AG04449 (cell line): ENCODE measurements at regions of chr4 and their contacts with region 1.

Region 1: DNA sequence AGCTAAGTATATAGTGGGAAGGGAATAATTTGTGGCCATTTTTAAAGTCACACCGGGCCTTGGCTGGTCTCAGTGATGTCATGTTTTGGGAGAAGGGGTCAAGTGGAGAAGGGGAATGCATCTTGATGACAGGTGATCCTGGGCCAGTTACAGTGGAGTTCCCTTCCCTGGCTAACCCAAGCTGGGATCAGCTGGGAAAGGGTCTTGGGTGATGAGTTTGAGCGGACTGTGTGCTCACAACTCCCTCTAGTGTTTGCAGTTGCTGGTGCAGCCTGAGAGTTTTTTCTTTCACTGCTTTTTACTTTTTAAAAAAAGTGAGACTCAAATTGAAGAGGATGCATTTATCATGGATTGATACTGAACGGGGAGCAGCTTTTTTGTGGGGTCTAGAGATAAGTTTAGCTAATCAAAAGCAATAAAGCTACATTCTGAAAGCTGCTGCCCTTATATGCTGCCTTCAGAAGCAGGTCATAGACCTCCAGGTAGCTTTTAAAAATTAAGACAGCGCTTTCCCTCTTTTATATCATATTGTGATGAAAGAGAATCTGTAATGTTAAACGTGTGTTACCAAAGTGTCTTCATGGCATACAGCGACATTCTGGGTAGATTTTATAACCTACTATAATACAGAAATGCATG is 164.7 kb downstream of the DCLK2 start:
- DNase-seq: no peak
- H3K4me3 ChIP-seq: no peak overlapping the region
- CTCF ChIP-seq: peak; percentile 78

Region 2: DNA sequence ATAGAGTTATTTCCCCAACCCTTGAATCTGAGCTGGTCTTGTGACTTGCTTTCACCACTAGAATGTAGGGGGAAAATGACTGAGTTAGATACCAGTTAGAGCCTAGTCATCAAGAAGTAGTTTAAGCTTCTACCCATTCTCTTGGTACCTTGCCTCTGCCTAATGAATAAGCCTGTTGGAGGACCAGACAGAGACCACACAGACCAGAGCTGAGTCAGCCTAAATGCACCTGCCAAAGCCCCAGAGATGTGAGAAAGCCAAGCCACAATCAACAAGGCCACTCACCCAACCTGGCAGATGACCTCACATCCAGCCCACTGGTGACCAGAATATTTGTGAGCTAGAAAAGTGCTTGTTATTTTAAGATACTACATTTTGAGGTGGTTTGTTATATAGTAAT is 249.9 kb before region 1 on chr4:
- CTCF ChIA-PET with region 1: interaction called, 64 read pairs
- POLR2A ChIA-PET with region 1: no interaction called
- DNase-seq: no peak
- H3K4me3 ChIP-seq: no peak overlapping the region
- CTCF ChIP-seq: no peak

Region 3: GRCh38 chr4:150078637-150079581 is 164.0 kb before region 1 on chr4:
- CTCF ChIA-PET with region 1: interaction called, 10 read pairs
- POLR2A ChIA-PET with region 1: interaction called, 3 read pairs
- DNase-seq: no peak
- H3K4me3 ChIP-seq: peak overlapping the region; percentile 82
- CTCF ChIP-seq: no peak

Region 4: DNA sequence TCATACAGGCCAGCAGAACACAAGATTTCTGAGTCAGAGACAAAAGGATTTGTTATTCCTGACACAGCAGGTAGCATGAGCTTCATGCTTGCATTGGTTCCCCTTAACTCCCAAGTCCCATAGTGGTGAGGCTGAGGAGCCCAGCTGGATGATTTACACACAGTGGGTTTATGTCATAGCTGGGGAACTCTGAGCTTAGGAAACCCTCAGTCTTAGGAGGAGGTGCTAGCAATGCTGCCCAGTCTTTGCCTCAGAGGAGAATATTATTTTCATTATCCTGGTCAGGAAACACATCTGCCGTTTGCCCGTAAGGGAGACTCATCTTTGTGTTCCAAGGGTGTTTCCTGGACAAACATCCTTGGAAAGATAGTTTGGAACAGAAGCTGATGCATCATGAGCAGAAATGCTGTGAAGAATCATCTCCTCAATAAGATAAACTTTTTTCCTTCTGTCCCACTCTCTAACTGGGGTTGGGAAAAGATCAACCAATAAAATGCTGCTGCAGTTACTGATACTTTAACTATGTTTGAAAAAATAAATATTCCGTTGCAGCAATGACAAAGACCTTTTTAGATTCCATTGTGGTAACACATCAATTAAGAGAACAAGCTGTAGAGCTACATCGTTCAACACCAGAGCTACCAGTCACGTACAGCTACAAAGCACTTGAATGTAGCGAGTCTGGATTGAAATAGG is 17.9 kb before region 1 on chr4:
- CTCF ChIA-PET with region 1: interaction called, 28 read pairs
- POLR2A ChIA-PET with region 1: interaction called, 7 read pairs
- DNase-seq: peak; percentile 93
- H3K4me3 ChIP-seq: no peak overlapping the region
- CTCF ChIP-seq: no peak

Region 5: DNA sequence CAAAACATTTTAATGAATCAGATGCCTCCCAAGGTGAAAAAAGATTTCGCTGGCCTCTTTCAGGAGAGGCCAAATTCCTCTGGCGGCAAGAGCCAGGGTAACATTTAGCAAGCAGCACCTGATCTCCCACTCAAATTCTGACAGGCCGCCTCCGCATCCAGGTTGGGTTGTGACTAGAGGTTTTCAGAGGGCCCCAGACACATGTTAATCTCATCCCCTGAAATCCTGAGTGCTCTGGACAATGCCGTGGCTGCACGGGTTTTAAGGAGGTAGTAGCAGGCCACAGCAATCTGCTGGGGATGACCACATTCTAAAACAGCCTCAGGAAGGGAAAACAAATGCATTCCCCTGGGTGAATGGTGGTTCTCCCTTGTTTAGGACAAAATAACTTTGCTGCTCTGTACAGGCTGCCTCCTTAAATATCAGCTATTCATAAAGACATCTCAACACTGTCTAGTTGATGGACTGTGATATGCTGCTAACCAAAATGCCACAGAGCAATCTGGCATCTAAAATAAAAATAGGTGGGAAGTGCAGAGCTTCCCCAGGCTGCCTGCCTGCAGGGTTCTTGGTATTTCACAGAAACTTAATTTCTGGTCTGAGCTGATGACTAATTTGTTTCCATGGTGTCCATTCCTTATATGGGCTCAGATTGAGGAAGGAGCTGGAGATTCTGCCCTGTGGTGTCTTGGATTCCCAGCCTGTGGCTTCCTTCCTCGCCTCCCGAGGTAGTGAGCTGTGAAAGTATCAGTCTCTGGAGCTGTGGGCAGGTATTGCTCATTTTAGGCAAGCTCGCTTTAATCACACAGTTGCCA is 37.3 kb after region 1 on chr4:
- CTCF ChIA-PET with region 1: interaction called, 11 read pairs
- POLR2A ChIA-PET with region 1: interaction called, 3 read pairs
- DNase-seq: peak; percentile 74
- H3K4me3 ChIP-seq: no peak overlapping the region
- CTCF ChIP-seq: no peak